A673 (cell line): ENCODE measurements at regions of chr6 and their contacts with region 1.

Region 1: GRCh38 chr6:84967389-84967788 is 203.0 kb upstream of the TBX18 start:
- DNase-seq: peak; percentile 81
- H3K4me3 ChIP-seq: no peak overlapping the region
- H3K27ac ChIP-seq: no peak overlapping the region
- H3K4me1 ChIP-seq: no peaks in the 10 kb centered on the region
- H3K27me3 ChIP-seq: no peaks in the 10 kb centered on the region
- CTCF ChIP-seq: peak; percentile 76

Region 2: GRCh38 chr6:83884523-83884922 is 1082.9 kb before region 1 on chr6:
- CTCF ChIA-PET with region 1: no interaction called
- POLR2A ChIA-PET with region 1: no interaction called
- intact Hi-C with region 1: loop called (anchors 10 kb)
- DNase-seq: peak; percentile 80
- H3K4me3 ChIP-seq: no peak overlapping the region
- H3K27ac ChIP-seq: no peak overlapping the region
- H3K4me1 ChIP-seq: peaks cover 18% of the 10 kb centered on the region
- H3K27me3 ChIP-seq: no peaks in the 10 kb centered on the region
- CTCF ChIP-seq: peak; percentile 79

Region 3: DNA sequence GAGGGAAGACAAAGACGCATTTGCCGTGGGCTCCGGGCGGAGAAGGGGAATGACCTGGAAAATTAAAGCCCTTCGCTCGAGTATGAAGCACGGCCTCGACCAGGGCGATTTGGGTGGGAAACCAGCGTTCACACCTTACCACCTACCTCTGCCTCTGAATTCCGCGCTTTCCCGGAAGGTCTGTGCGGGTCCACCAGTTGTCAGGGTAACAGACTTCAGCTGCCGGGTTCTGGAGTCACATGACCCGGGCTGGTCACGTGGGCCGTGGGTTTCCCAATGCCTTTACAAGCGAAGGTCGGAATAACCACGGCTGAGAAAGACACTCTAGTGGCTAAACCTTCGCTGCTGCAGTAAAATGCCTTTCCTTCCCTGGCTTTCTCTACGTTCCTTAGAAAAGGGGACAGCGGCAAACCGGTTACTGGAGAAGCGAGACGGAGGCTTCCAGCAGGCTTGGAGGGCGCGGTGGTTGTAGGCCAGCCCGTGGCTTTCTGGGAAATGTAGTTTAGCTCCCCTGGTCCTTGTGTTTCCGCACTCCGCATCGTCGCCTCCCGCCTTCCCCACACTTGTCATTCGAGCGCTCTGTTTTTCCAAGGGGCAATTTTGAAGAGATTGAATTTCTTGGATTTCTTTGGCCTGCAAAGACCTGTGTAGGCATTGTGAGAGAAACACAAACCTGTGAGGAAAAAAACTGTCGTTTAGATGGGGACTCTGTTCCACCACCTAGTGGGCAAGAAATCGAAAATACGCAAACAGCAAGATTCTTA is 739.8 kb before region 1 on chr6 and contains the start of gene CEP162:
- CTCF ChIA-PET with region 1: no interaction called
- POLR2A ChIA-PET with region 1: no interaction called
- intact Hi-C with region 1: loop called (anchors 10 kb)
- DNase-seq: peak; percentile 93
- H3K4me3 ChIP-seq: peak within 1 kb of the TSS; percentile 74
- H3K27ac ChIP-seq: peak within 1 kb of the TSS; percentile 70
- H3K4me1 ChIP-seq: peaks cover 8% of the 10 kb centered on the region
- H3K27me3 ChIP-seq: peaks cover 12% of the 10 kb centered on the region
- CTCF ChIP-seq: peak; percentile 76
- total RNA-seq, gene CEP162: 12.1 and 15.9 TPM in 2 replicates

Region 4: GRCh38 chr6:84428300-84428907 is 539.0 kb before region 1 on chr6:
- CTCF ChIA-PET with region 1: interaction called, 4 read pairs
- POLR2A ChIA-PET with region 1: no interaction called
- intact Hi-C with region 1: loop called (anchors 1 kb)
- DNase-seq: peak; percentile 62
- H3K4me3 ChIP-seq: no peak overlapping the region
- H3K27ac ChIP-seq: no peak overlapping the region
- H3K4me1 ChIP-seq: no peaks in the 10 kb centered on the region
- H3K27me3 ChIP-seq: peaks cover 10% of the 10 kb centered on the region
- CTCF ChIP-seq: peak; percentile 87

Region 5: DNA sequence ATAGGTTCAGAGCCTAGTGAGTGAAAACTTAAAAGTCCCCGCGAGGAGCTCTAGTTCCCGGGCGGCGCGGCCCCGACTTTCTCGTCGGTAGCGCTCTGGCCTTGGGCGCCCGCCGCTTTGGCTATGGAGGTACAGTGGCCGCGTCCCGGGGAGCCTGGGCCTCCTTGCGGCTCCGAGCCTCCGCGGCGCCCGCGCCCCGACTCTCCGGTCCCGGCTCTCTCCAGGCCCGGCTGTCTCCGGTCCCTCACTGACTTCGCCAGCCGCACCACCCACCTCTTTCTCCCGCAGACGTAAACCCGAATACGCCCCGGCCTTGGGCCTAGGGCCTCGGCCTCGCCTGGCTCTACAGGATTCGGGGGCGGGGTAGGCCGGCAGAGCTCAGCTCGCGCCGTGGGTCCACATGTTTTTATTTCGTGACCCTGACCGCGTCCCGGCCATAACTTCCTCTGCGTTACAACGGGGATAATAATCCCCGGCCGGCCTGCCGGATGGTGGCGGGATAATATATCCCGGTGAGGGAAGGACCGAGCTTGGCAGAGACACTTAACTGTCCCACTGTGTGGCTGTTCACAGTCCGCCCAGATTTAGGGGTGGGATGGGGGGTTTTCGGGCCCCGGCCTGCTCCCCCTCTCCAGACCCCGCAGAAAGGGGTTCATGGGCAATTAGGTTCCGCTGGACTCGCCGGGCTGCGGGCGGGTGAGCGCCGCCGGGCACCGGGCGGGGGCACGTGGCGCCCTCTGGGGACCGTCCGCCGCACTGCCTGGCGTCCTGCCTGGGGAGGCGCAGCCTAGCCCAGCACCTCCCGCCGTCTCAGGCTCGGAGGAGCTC is 193.0 kb before region 1 on chr6:
- CTCF ChIA-PET with region 1: no interaction called
- POLR2A ChIA-PET with region 1: no interaction called
- intact Hi-C with region 1: loop called (anchors 5 kb)
- DNase-seq: peak; percentile 73
- H3K4me3 ChIP-seq: peak overlapping the region; percentile 60
- H3K27ac ChIP-seq: peak overlapping the region; percentile 73
- H3K4me1 ChIP-seq: no peaks in the 10 kb centered on the region
- H3K27me3 ChIP-seq: peaks cover 54% of the 10 kb centered on the region
- CTCF ChIP-seq: peak; percentile 63; the same call in 1 of the 2 replicates

Region 6: DNA sequence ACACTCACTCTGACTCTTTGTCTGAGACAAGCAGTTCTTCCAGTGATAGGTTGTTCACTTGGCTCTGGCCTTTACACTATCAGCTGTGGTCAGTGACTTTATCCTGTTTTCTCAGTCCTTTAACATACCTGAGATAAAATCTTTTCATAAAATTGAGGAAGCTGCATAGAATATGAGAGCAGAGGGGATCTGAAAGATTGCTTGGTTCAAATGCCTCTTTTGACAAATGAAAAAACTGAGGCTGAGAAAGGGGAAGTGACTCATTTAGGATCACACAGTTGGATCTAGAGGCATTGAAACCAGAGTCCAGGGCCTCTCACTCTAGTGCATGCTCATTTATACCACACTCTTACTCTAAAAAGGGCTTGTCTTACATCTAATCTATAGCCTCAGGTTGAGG is 74.0 kb after region 1 on chr6:
- CTCF ChIA-PET with region 1: no interaction called
- POLR2A ChIA-PET with region 1: no interaction called
- intact Hi-C with region 1: no loop called
- DNase-seq: no peak
- H3K4me3 ChIP-seq: no peak overlapping the region
- H3K27ac ChIP-seq: no peak overlapping the region
- H3K4me1 ChIP-seq: no peaks in the 10 kb centered on the region
- H3K27me3 ChIP-seq: no peaks in the 10 kb centered on the region
- CTCF ChIP-seq: no peak

Region 7: GRCh38 chr6:85126485-85127167 is 159.2 kb after region 1 on chr6:
- CTCF ChIA-PET with region 1: no interaction called
- POLR2A ChIA-PET with region 1: no interaction called
- intact Hi-C with region 1: loop called (anchors 5 kb)
- DNase-seq: peak; percentile 81
- H3K4me3 ChIP-seq: peak overlapping the region; percentile 4
- H3K27ac ChIP-seq: peak overlapping the region; percentile 2
- H3K4me1 ChIP-seq: peaks cover 28% of the 10 kb centered on the region
- H3K27me3 ChIP-seq: no peaks in the 10 kb centered on the region
- CTCF ChIP-seq: peak; percentile 81